ENCODE measurements at regions of chr12 and their contacts with region 1.

Region 1: DNA sequence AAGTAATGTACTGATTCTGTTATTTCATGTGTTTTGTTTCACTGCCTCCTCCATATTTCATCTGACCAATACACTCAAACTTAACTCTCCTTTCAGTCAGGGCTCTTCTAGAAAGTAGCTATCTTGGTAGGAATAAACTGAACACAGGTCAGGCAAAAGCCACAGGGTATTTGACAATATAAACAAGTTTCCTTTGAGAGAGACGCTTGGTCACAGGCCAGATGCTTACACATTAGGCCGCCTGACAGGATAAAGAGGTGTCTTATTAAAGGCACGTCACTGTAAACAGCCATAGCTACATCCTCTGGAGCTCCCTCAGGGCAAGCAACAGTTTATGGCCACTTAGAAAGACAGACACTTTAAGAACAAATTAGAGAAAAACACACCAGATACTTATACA is 607.5 kb downstream of the SLC6A15 start:
- DNase-seq: no peak
- H3K4me3 ChIP-seq: no peak overlapping the region
- H3K27ac ChIP-seq: no peak overlapping the region
- H3K4me1 ChIP-seq: no peaks in the 10 kb centered on the region
- H3K27me3 ChIP-seq: no peaks in the 10 kb centered on the region
- CTCF ChIP-seq: no peak
- EP300 ChIP-seq: no peak
- POLR2A ChIP-seq: no peak

Region 2: GRCh38 chr12:84397263-84397662 is 92.1 kb after region 1 on chr12:
- in situ Hi-C with region 1: no loop called
- intact Hi-C with region 1: no loop called
- DNase-seq: no peak
- H3K4me3 ChIP-seq: no peak overlapping the region
- H3K27ac ChIP-seq: no peak overlapping the region
- H3K4me1 ChIP-seq: no peaks in the 10 kb centered on the region
- H3K27me3 ChIP-seq: no peaks in the 10 kb centered on the region
- CTCF ChIP-seq: peak in 2 of 5 experiments; percentile 13 to 20
- EP300 ChIP-seq: no peak
- POLR2A ChIP-seq: no peak

Region 3: DNA sequence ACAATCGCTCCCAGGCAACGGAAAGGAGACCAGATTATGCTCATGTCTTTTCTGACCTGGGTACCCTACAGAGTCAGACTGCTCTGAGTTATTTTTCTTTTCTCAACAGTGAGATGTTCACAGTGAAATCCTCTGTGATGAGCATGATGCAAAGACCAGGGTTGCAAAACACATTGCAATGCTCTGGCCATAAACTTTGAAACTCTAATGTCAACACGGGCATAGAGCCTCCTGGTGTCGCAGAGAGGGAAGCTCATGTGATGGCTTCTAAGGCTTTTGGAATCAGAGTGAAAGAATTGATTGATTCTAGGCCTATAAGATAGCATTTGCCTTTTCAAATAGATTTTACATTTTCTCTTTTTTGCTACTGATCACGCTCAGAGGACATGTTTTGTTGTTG is 1337.7 kb after region 1 on chr12:
- in situ Hi-C with region 1: no loop called
- intact Hi-C with region 1: loop called (anchors 10 kb)
- DNase-seq: no peak
- H3K4me3 ChIP-seq: no peak overlapping the region
- H3K27ac ChIP-seq: no peak overlapping the region
- H3K4me1 ChIP-seq: no peaks in the 10 kb centered on the region
- H3K27me3 ChIP-seq: no peaks in the 10 kb centered on the region
- CTCF ChIP-seq: peak in 3 of 5 experiments; percentile 14 to 25 (median 17)
- EP300 ChIP-seq: no peak
- POLR2A ChIP-seq: no peak

Measured in transverse colon (tissue), 4 donors.